ENCODE measurements at regions of chr1 and their contacts with region 1.

Region 1: GRCh38 chr1:153577624-153578051 is 12.0 kb upstream of the S100A2 start:
- DNase-seq: no peak
- H3K4me3 ChIP-seq: no peak overlapping the region
- H3K27ac ChIP-seq: peak overlapping the region; percentile 7 to 82 (median 50)
- H3K4me1 ChIP-seq: peaks cover 5 to 58% (median 31%) of the 10 kb centered on the region in 3 donors
- H3K27me3 ChIP-seq: no peaks in the 10 kb centered on the region
- CTCF ChIP-seq: no peak
- POLR2A ChIP-seq: no peak

Region 2: DNA sequence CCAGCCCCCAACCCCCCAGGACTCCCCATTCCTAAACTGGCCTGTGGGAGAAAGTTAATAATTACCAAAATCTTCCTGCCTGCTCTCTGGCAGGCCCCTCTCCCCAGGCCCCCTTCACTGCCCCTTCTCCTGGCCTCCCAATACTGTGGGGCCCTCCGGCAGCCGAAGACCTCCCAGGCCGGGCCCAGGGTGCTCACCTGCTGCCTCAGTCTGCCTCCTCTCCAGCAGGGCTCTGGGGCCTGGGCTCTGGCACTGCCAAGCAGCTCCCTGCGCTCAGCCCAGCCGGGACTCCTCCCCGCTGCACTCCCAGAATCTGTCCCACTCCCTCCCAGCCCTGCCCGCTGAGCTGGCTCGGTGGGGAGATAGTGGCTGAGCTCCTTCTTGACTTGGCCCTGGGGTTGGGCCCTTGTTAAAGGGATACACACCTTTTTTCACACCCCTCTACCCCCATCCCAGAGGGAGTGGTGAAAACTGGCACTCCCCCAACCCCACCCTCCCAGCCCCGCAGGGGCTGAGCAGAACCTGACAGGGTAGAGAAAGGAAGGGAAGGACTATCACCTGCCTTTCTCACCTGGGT is 35.2 kb after region 1 on chr1 and contains the start of gene S100A16:
- intact Hi-C with region 1: loop called (anchors 5 kb)
- DNase-seq: no peak
- H3K4me3 ChIP-seq: peak within 1 kb of the TSS; percentile 54 to 76 (median 66)
- H3K27ac ChIP-seq: peak within 1 kb of the TSS; percentile 92 to 96 (median 94)
- H3K4me1 ChIP-seq: peaks cover 26 to 89% (median 50%) of the 10 kb centered on the region in 3 donors
- H3K27me3 ChIP-seq: no peaks in the 10 kb centered on the region
- CTCF ChIP-seq: no peak
- POLR2A ChIP-seq: peak in 3 of 4 donors; percentile 89 to 90 (median 89)
- total RNA-seq, gene S100A16: 1,372 to 2,409 (median 2,158) TPM